ENCODE measurements at regions of chr11 and their contacts with region 1.

Region 1: GRCh38 chr11:61792310-61793085 is at the starts of genes FEN1 and TMEM258:
- DNase-seq: peak; percentile 94
- ATAC-seq: peak; percentile 87
- H3K4me3 Mint-ChIP-seq: peak within 1 kb of the TSS; percentile 89
- H3K27ac Mint-ChIP-seq: peak within 1 kb of the TSS; percentile 100
- H3K4me1 Mint-ChIP-seq: peaks cover 57% of the 10 kb centered on the region
- H3K27me3 Mint-ChIP-seq: no peaks in the 10 kb centered on the region
- CTCF ChIP-seq: no peak
- total RNA-seq, gene FEN1: 109 to 114 TPM
- total RNA-seq, gene TMEM258: 162 to 170 TPM

Region 2: GRCh38 chr11:61747192-61747966 is 45.1 kb before region 1 on chr11:
- CTCF ChIA-PET with region 1: interaction called, 10 read pairs
- POLR2A ChIA-PET with region 1: no interaction called
- intact Hi-C with region 1: no loop called
- DNase-seq: peak; percentile 67
- ATAC-seq: peak; percentile 70
- H3K4me3 Mint-ChIP-seq: no peak overlapping the region
- H3K27ac Mint-ChIP-seq: no peak overlapping the region
- H3K4me1 Mint-ChIP-seq: peaks cover 2% of the 10 kb centered on the region
- H3K27me3 Mint-ChIP-seq: peaks cover 21% of the 10 kb centered on the region
- CTCF ChIP-seq: peak; percentile 97

Region 3: GRCh38 chr11:61803889-61804647 is 11.6 kb after region 1 on chr11:
- CTCF ChIA-PET with region 1: interaction called, 44 read pairs
- POLR2A ChIA-PET with region 1: interaction called, 18 read pairs
- intact Hi-C with region 1: no loop called
- DNase-seq: no peak
- ATAC-seq: no peak
- H3K4me3 Mint-ChIP-seq: no peak overlapping the region
- H3K27ac Mint-ChIP-seq: peak overlapping the region; percentile 44
- H3K4me1 Mint-ChIP-seq: peaks cover 3% of the 10 kb centered on the region
- H3K27me3 Mint-ChIP-seq: no peaks in the 10 kb centered on the region
- CTCF ChIP-seq: no peak

Region 4: GRCh38 chr11:61827571-61828378 is 35.3 kb after region 1 on chr11 and contains the start of gene FADS2:
- CTCF ChIA-PET with region 1: interaction called, 15 read pairs
- POLR2A ChIA-PET with region 1: interaction called, 10 read pairs
- intact Hi-C with region 1: no loop called
- DNase-seq: peak; percentile 94
- ATAC-seq: peak; percentile 87
- H3K4me3 Mint-ChIP-seq: peak within 1 kb of the TSS; percentile 86
- H3K27ac Mint-ChIP-seq: peak within 1 kb of the TSS; percentile 91
- H3K4me1 Mint-ChIP-seq: peaks cover 32% of the 10 kb centered on the region
- H3K27me3 Mint-ChIP-seq: peaks cover 9% of the 10 kb centered on the region
- CTCF ChIP-seq: no peak
- total RNA-seq, gene FADS2: 131 to 134 TPM

Region 5: GRCh38 chr11:61947486-61948210 is 155.2 kb after region 1 on chr11:
- CTCF ChIA-PET with region 1: interaction called, 24 read pairs
- POLR2A ChIA-PET with region 1: no interaction called
- intact Hi-C with region 1: no loop called
- DNase-seq: peak; percentile 82
- ATAC-seq: peak; percentile 77
- H3K4me3 Mint-ChIP-seq: no peak overlapping the region
- H3K27ac Mint-ChIP-seq: no peak overlapping the region
- H3K4me1 Mint-ChIP-seq: peaks cover 7% of the 10 kb centered on the region
- H3K27me3 Mint-ChIP-seq: peaks cover 3% of the 10 kb centered on the region
- CTCF ChIP-seq: peak; percentile 80

Measured in activated CD8-positive, alpha-beta T cell treated with anti-CD3 and anti-CD28 coated beads for 36 hours (primary cell).